A549 (cell line): ENCODE measurements at regions of chr7 and their contacts with region 1.

Region 1: DNA sequence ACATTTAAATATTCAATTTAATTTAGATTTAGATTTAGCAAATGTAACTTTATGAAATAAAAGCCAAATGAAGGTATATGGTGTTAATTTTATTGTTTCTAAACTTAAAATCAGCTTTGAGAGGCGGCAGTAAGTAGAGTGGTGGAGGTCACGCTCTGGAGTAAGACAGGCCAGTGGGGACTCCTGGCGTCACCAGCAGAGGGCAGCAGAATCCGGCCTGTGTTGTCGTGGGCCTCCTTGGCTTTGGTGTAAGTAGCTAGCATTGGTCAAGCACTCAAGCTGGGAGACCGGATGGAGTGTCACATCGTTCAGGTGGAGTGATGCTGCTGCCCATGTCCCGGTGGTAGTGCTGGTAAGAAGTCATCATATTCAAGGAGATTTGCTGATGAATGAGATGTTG is 98.7 kb upstream of the DNAJB6 start:
- DNase-seq: peak in 1 of 2 experiments; percentile 37
- ATAC-seq: peak in 1 of 2 experiments; percentile 82; a peak in 3 of 6 replicates
- H3K4me3 ChIP-seq: no peak overlapping the region
- H3K27ac ChIP-seq: no peak overlapping the region
- H3K4me1 ChIP-seq: peaks cover 8% of the 10 kb centered on the region; the same call in 1 of the 3 replicates
- CTCF ChIP-seq: peak; percentile 28; the same call in 1 of the 3 replicates
- EP300 ChIP-seq: no peak
- POLR2A ChIP-seq: no peak
- RAD21 ChIP-seq: peak; percentile 10 to 28; a peak in 1 of 5 replicates

Region 2: DNA sequence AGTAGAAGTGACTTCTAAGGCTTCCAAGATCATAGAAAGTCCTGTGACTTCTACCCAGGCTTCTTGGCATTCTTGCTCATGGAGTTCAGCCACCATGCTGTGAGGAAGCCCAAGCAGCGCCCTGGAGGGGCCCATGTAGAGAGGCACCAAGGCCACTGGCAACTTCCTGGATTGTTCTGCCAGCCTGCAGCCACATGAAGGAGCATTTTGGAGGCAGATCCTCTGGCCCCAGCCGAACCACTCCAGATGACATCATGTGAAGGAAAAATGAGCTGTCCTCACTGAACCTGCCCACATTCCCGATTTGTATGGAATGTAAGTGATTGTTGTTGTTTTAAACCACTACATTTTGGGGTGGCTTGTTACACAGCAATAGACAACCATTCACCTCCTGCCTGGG is 176.1 kb before region 1 on chr7:
- CTCF ChIA-PET with region 1: no interaction called
- POLR2A ChIA-PET with region 1: no interaction called
- DNase-seq: no peak
- ATAC-seq: no peak
- H3K4me3 ChIP-seq: no peak overlapping the region
- H3K27ac ChIP-seq: no peak overlapping the region
- H3K4me1 ChIP-seq: no peaks in the 10 kb centered on the region
- CTCF ChIP-seq: no peak
- EP300 ChIP-seq: no peak
- POLR2A ChIP-seq: no peak
- RAD21 ChIP-seq: no peak

Region 3: GRCh38 chr7:157222687-157223086 is 15.4 kb before region 1 on chr7:
- CTCF ChIA-PET with region 1: interaction called, 11 read pairs
- POLR2A ChIA-PET with region 1: no interaction called
- DNase-seq: no peak
- ATAC-seq: peak; percentile 19 to 30; a peak in 3 of 6 replicates
- H3K4me3 ChIP-seq: no peak overlapping the region
- H3K27ac ChIP-seq: no peak overlapping the region
- H3K4me1 ChIP-seq: no peaks in the 10 kb centered on the region
- CTCF ChIP-seq: no peak
- EP300 ChIP-seq: no peak
- POLR2A ChIP-seq: no peak
- RAD21 ChIP-seq: no peak

Region 4: DNA sequence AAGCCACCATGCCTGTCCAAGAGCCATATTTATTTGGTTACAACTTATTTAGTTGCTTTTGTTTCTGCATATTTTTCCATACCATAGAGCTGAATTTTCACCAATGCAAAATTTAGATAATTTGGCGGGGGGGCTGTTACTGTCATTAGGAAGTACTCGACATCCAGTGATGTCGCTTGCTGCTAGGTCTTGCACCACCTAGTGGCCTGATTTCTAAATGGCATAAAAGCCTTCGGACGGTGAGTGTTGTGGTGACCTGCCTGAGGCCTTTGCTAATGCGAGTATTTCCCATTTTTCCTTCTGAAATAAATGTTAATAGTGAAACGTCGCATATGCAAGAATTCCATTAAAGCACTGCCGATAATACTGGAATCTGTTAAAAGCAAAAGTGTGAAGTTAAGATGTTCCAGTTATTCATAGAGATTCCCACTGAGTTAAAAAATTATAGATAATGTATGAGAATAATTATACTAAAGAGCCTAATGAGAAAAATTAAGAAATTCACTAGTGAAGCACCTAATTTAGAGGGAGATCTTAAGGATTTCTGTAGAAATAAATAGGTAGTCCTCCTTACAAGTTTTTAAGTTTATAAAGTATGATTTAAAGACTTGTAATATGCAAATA is 12.6 kb after region 1 on chr7:
- CTCF ChIA-PET with region 1: interaction called, 18 read pairs
- POLR2A ChIA-PET with region 1: no interaction called
- DNase-seq: peak; percentile 38 to 73
- ATAC-seq: peak; percentile 83 to 85; a peak in 5 of 6 replicates
- H3K4me3 ChIP-seq: no peak overlapping the region
- H3K27ac ChIP-seq: no peak overlapping the region
- H3K4me1 ChIP-seq: no peaks in the 10 kb centered on the region
- CTCF ChIP-seq: peak; percentile 73
- EP300 ChIP-seq: no peak
- POLR2A ChIP-seq: no peak
- RAD21 ChIP-seq: peak in 1 of 2 experiments; percentile 24; a peak in 2 of 5 replicates